ENCODE measurements at regions of chr19 and their contacts with region 1.

Region 1: GRCh38 chr19:35264268-35265125 is 4.3 kb upstream of the USF2 start:
- DNase-seq: no peak
- ATAC-seq: no peak
- H3K4me3 ChIP-seq: no peak overlapping the region
- H3K27ac ChIP-seq: peak overlapping the region; percentile 17; the same call in 1 of the 2 replicates
- H3K4me1 ChIP-seq: peaks cover 29% of the 10 kb centered on the region
- H3K27me3 ChIP-seq: no peaks in the 10 kb centered on the region
- CTCF ChIP-seq: no peak

Region 2: DNA sequence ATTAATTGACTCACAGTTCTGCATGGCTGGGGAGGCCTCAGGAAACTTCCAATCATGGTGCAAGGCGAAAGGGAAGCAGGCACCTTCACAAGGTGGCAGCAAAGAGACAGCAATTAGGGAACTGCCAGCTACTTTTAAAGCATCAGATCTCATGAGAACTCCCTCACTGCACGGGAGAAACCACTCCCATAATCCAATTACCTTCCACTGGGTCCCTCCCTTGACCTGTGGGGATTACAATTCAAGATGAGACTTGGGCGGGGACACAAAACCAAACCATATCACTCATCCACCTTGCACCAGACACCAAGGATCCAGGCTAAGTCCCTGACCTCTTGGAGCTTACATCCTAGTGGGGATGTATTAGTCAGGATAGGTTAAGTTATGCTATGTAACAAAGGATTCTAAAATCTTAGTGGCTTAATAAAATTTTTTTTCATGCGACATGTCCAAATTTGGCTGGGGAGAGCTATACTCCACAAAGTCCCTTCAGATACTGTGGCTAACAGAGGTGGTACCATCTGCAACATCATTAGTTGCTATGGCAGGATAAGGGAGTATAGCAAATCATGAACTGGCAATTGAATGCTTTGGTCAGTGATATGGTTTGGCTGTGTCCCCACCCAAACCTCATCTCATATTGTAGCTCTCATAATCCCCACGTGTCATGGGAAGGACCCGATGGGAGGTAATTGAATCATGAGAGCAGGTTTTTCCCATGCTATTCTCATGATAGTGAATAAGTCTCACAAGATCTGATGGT is 27.7 kb before region 1 on chr19:
- CTCF ChIA-PET with region 1: interaction called, 12 read pairs
- POLR2A ChIA-PET with region 1: no interaction called
- in situ Hi-C with region 1: no loop called
- intact Hi-C with region 1: no loop called
- DNase-seq: no peak
- ATAC-seq: 0 out of 2 replicates have a peak, but pooled peaks have one; percentile 34
- H3K4me3 ChIP-seq: no peak overlapping the region
- H3K27ac ChIP-seq: no peak overlapping the region
- H3K4me1 ChIP-seq: no peaks in the 10 kb centered on the region
- H3K27me3 ChIP-seq: peaks cover 15% of the 10 kb centered on the region; the same call in 1 of the 2 replicates
- CTCF ChIP-seq: no peak

Region 3: GRCh38 chr19:35657904-35658700 is 393.6 kb after region 1 on chr19:
- CTCF ChIA-PET with region 1: no interaction called
- POLR2A ChIA-PET with region 1: no interaction called
- in situ Hi-C with region 1: no loop called
- intact Hi-C with region 1: no loop called
- DNase-seq: no peak
- ATAC-seq: peak; percentile 76
- H3K4me3 ChIP-seq: no peak overlapping the region
- H3K27ac ChIP-seq: no peak overlapping the region
- H3K4me1 ChIP-seq: no peaks in the 10 kb centered on the region
- H3K27me3 ChIP-seq: no peaks in the 10 kb centered on the region
- CTCF ChIP-seq: no peak

Measured in Panc1 (cell line).